Panc1 (cell line): ENCODE measurements at regions of chr16 and their contacts with region 1.

Region 1: GRCh38 chr16:49688036-49688697 is 167.7 kb downstream of the ZNF423 start:
- DNase-seq: no peak
- ATAC-seq: no peak
- H3K4me3 ChIP-seq: no peak overlapping the region
- H3K27ac ChIP-seq: no peak overlapping the region
- H3K4me1 ChIP-seq: no peaks in the 10 kb centered on the region
- H3K27me3 ChIP-seq: no peaks in the 10 kb centered on the region; the same call in 1 of the 2 replicates
- CTCF ChIP-seq: no peak

Region 2: GRCh38 chr16:49639739-49640431 is 48.3 kb before region 1 on chr16:
- CTCF ChIA-PET with region 1: no interaction called
- POLR2A ChIA-PET with region 1: interaction called, 10 read pairs
- in situ Hi-C with region 1: no loop called
- intact Hi-C with region 1: no loop called
- DNase-seq: no peak
- ATAC-seq: no peak
- H3K4me3 ChIP-seq: no peak overlapping the region
- H3K27ac ChIP-seq: no peak overlapping the region
- H3K4me1 ChIP-seq: no peaks in the 10 kb centered on the region
- H3K27me3 ChIP-seq: no peaks in the 10 kb centered on the region; the same call in 1 of the 2 replicates
- CTCF ChIP-seq: no peak